ENCODE measurements at regions of chr4 and their contacts with region 1.

Region 1: DNA sequence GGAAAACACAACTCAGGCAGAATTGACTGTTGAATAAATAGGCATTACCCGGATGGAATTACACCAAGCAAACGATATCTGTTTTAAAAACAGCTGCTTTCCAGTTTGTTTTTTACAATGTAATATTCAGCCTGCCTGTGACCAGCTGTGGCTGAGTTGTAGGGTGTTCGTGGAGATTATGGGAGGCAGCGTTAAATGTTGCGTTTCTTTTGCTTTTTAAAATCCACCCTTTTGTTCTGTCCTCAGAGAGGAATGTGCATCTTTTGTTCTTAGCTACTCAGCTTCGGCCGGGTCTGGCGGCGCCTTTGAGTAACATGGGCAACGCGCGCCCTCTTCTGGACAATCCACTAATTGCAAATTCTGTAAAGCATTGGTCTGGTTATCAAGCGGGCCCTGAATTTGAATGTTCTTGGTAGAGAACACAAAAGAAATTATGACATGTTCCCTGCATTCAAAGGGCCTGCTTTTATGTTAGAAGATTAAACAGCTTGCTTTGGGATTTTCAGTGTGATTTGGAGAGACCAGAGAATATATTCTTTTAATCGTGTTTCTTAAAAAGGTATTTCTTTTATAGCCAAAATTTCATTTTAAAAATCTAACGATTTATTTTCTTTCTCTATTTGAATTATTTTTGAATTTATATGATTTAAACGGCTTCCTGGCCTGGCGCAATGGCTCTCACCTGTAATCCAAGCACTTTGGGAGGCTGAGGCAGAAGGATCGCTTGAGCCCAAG is 76.3 kb upstream of the TRIM2 start:
- DNase-seq: no peak
- H3K4me3 ChIP-seq: no peak overlapping the region; the same call in 1 of the 2 replicates
- CTCF ChIP-seq: peak; percentile 74

Region 2: DNA sequence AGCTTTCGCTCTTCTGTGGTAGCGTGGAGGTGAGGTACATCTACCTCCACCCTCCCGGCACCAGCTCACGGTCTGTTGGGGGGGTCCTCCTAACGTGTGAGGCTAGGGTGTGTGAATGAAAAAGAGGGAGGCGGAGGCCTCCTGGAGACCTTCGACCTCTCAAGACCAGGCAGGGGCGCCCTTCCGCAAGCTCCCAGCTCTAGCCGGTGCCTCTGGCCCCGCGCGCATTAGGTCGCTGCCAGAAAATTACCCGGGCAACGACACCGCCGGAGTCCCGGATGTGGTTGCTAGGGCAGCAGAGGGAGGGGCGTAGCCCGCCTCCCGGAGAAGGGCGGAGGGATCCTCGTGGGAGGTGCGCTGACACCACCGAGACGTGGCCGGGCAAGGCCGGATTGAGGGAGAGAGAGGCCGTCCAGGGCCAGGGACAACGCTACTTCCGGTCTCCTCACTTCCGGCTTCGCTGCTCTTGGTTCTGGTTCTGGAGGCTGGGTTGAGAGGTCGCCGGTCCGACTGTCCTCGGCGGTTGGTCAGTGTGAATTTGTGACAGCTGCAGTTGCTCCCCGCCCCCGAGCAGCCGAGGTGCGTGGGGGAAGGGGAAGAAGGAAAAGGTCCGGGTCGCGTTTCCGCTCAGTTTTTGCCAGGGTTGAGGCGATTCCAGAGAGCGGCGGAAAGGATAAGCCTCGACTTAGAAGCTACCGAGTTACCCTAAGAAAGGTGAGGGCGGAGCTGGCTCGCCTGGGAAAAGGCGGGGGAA is 348.2 kb before region 1 on chr4 and contains the starts of genes ARFIP1 and TIGD4:
- CTCF ChIA-PET with region 1: interaction called, 19 read pairs
- POLR2A ChIA-PET with region 1: no interaction called
- DNase-seq: peak; percentile 71
- H3K4me3 ChIP-seq: peak within 1 kb of the TSS; percentile 87
- CTCF ChIP-seq: no peak

Region 3: DNA sequence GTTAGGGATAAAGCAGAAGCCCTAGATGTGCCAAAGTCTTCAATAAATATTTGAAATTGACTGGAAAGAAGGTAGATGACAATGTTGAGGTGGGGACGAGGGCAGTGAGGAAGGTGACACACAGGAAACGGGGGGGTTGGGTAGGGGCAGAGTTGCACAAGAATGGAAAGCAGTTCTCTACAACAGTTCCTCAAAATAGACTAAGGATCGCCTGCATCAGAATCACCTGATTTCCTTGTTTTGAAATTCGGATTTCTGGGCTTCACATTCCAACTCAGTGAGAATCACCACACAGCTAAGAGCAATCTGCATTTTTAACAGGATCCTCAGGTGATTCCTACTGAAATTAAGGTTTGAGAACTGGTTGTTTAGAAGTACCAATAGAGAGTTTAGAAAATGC is 277.6 kb before region 1 on chr4:
- CTCF ChIA-PET with region 1: interaction called, 96 read pairs
- POLR2A ChIA-PET with region 1: no interaction called
- DNase-seq: no peak
- H3K4me3 ChIP-seq: no peak overlapping the region
- CTCF ChIP-seq: no peak

Region 4: GRCh38 chr4:153083447-153083947 is 44.4 kb before region 1 on chr4:
- CTCF ChIA-PET with region 1: interaction called, 319 read pairs
- POLR2A ChIA-PET with region 1: no interaction called
- DNase-seq: peak; percentile 31
- H3K4me3 ChIP-seq: no peak overlapping the region
- CTCF ChIP-seq: peak; percentile 59

Region 5: GRCh38 chr4:153107246-153107645 is 20.7 kb before region 1 on chr4:
- CTCF ChIA-PET with region 1: interaction called, 92 read pairs
- POLR2A ChIA-PET with region 1: no interaction called
- DNase-seq: no peak
- H3K4me3 ChIP-seq: no peak overlapping the region
- CTCF ChIP-seq: no peak

Region 6: GRCh38 chr4:153260553-153261300 is 132.8 kb after region 1 on chr4:
- CTCF ChIA-PET with region 1: no interaction called
- POLR2A ChIA-PET with region 1: no interaction called
- DNase-seq: no peak
- H3K4me3 ChIP-seq: no peak overlapping the region
- CTCF ChIP-seq: no peak

Region 7: GRCh38 chr4:153276971-153277370 is 149.0 kb after region 1 on chr4:
- CTCF ChIA-PET with region 1: no interaction called
- POLR2A ChIA-PET with region 1: no interaction called
- DNase-seq: no peak
- H3K4me3 ChIP-seq: no peak overlapping the region
- CTCF ChIP-seq: no peak

Region 8: GRCh38 chr4:153725136-153725830 is 597.4 kb after region 1 on chr4:
- CTCF ChIA-PET with region 1: no interaction called
- POLR2A ChIA-PET with region 1: no interaction called
- DNase-seq: no peak
- H3K4me3 ChIP-seq: no peak overlapping the region
- CTCF ChIP-seq: no peak

Measured in AG04449 (cell line).